ENCODE measurements at regions of chr4 and their contacts with region 1.

Region 1: GRCh38 chr4:170259631-170260153 is 169.9 kb upstream of the AADAT start:
- DNase-seq: peak; percentile 61
- H3K4me3 ChIP-seq: peak overlapping the region in 1 of 2 experiments; percentile 57; a peak in 1 of 4 replicates
- H3K27ac ChIP-seq: no peak overlapping the region
- H3K4me1 ChIP-seq: no peaks in the 10 kb centered on the region
- H3K27me3 ChIP-seq: peaks cover 4% of the 10 kb centered on the region; the same call in 1 of the 2 replicates
- CTCF ChIP-seq: peak; percentile 100
- EP300 ChIP-seq: no peak
- RAD21 ChIP-seq: peak; percentile 96

Region 2: DNA sequence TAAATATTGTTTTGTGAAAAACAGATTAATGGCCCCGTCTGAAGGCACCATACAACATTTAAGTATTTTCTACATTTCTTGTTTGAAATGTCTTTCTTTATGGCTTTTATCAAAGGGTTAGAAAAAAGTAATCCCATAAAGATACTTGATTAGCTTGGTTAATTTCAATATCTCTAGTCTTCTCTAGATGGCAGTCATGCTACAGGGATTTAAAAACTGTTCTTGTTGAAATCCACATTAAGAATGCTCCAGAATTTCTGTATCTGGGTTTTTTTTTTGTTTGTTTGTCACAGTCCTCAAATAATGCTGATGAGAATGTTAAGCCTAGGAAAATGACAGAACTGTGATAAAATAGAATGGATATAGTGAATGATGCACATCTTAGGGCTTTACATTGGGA is 60.9 kb before region 1 on chr4:
- CTCF ChIA-PET with region 1: interaction called, 16 read pairs
- POLR2A ChIA-PET with region 1: no interaction called
- DNase-seq: no peak
- H3K4me3 ChIP-seq: no peak overlapping the region
- H3K27ac ChIP-seq: no peak overlapping the region
- H3K4me1 ChIP-seq: no peaks in the 10 kb centered on the region
- H3K27me3 ChIP-seq: no peaks in the 10 kb centered on the region
- CTCF ChIP-seq: peak; percentile 56
- EP300 ChIP-seq: no peak
- RAD21 ChIP-seq: peak; percentile 38

Region 3: DNA sequence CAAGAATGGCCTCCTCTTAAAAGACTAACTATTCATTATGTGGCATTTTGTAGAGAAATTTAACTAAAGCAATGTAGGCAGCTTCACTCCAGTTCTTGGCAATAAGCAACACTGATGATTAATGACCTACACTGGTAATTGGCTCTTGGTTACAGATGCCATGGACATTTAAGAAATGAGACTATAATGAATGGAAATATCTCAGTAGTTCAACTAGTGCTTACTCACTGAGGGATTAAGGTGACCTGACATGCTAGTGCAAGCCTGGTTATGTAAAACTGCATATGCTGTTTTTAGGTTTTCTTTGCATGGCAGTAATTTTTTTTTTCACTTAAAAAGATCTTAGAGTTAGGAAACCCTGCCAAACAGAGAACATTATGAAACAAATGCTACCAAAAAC is 17.2 kb before region 1 on chr4:
- CTCF ChIA-PET with region 1: interaction called, 58 read pairs
- POLR2A ChIA-PET with region 1: no interaction called
- DNase-seq: no peak
- H3K4me3 ChIP-seq: no peak overlapping the region
- H3K27ac ChIP-seq: no peak overlapping the region
- H3K4me1 ChIP-seq: no peaks in the 10 kb centered on the region
- H3K27me3 ChIP-seq: no peaks in the 10 kb centered on the region
- CTCF ChIP-seq: no peak
- EP300 ChIP-seq: no peak
- RAD21 ChIP-seq: no peak

Region 4: DNA sequence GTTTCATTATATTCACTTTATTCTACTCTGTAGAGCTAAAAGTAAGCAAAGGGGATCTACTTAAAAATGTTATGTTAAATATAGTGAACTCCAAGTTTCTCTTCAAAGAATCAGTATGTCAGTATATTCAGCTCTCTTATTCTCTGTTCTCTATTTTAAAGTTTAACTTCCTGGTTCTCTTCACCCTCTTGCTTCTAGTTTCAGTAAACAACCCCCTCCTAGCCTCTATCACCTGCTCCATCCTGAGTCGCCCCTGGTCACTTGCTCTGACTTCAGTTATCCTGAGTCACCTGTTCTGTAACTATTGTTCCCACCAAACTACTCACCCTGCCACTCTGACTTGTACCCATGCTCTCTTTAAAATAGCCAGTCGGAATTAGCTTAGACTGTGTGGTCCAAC is 10.9 kb after region 1 on chr4:
- CTCF ChIA-PET with region 1: interaction called, 41 read pairs
- POLR2A ChIA-PET with region 1: no interaction called
- DNase-seq: no peak
- H3K4me3 ChIP-seq: no peak overlapping the region
- H3K27ac ChIP-seq: no peak overlapping the region
- H3K4me1 ChIP-seq: no peaks in the 10 kb centered on the region
- H3K27me3 ChIP-seq: peaks cover 8% of the 10 kb centered on the region; the same call in 1 of the 2 replicates
- CTCF ChIP-seq: no peak
- EP300 ChIP-seq: no peak
- RAD21 ChIP-seq: no peak

Region 5: DNA sequence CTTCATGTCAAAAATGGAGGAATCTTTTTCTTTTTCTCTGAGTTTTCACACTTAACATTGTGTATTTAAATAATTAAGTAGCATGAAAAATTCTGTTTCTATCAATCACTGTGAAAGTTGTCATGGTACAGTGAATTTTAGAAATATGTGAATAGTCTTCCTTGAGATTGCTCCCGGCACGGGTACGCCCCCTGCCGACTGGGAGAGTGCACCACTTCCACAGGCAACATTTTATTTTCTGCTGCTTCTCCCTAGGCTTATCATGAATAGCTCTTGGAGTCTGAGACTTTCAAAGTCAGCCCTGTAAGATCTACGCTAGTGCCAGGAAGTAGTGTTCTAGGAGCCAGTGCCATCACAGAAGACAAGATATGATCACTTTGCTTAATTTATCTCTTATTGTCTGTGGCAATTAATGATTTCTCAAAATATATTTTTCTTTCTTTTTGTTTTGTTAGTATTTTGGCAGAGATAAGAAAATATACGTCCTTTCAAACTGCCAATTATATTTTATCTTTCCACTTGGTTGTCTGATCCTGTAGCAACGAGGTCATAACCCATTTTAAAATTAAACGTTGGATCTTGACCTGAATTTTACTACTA is 593.8 kb after region 1 on chr4:
- CTCF ChIA-PET with region 1: interaction called, 26 read pairs
- POLR2A ChIA-PET with region 1: no interaction called
- DNase-seq: peak; percentile 33
- H3K4me3 ChIP-seq: peak overlapping the region in 1 of 2 experiments; percentile 14; a peak in 1 of 4 replicates
- H3K27ac ChIP-seq: no peak overlapping the region
- H3K4me1 ChIP-seq: no peaks in the 10 kb centered on the region
- H3K27me3 ChIP-seq: no peaks in the 10 kb centered on the region
- CTCF ChIP-seq: peak; percentile 94
- EP300 ChIP-seq: no peak
- RAD21 ChIP-seq: peak; percentile 85

Measured in SK-N-SH (cell line).